ENCODE measurements at regions of chrX and their contacts with region 1.

Region 1: GRCh38 chrX:45134775-45135174 is 65.9 kb downstream of the DIPK2B start:
- DNase-seq: no peak
- H3K4me3 Mint-ChIP-seq: no peak overlapping the region
- H3K27ac Mint-ChIP-seq: no peak overlapping the region
- H3K4me1 Mint-ChIP-seq: no peaks in the 10 kb centered on the region
- H3K27me3 Mint-ChIP-seq: no peaks in the 10 kb centered on the region

Region 2: GRCh38 chrX:45050558-45050957 is 84.2 kb before region 1 on chrX:
- intact Hi-C with region 1: no loop called
- DNase-seq: no peak
- H3K4me3 Mint-ChIP-seq: no peak overlapping the region
- H3K27ac Mint-ChIP-seq: no peak overlapping the region
- H3K4me1 Mint-ChIP-seq: peaks cover 5% of the 10 kb centered on the region
- H3K27me3 Mint-ChIP-seq: no peaks in the 10 kb centered on the region

Region 3: DNA sequence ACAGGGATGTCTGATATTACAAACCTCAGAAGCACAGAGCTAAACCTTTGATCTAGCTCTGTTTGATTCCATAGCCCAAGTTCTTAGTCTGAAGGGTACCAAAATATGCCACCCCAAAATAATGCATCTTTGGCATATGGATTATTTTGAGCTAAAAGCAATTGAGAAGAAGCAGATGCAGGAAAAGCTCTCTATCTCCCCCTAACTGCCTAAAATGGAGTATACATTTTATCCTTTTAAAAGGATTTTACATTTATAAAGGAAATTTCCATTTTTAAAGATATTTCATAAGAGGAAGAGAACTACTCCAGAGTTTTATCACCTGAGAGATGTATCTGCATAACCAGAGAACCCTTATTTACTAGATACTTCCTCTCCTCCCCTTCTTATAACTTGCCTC is 1251.7 kb after region 1 on chrX:
- intact Hi-C with region 1: loop called (anchors 5 kb)
- DNase-seq: no peak
- H3K4me3 Mint-ChIP-seq: no peak overlapping the region
- H3K27ac Mint-ChIP-seq: no peak overlapping the region
- H3K4me1 Mint-ChIP-seq: no peaks in the 10 kb centered on the region
- H3K27me3 Mint-ChIP-seq: peaks cover 9% of the 10 kb centered on the region

Measured in activated T-helper 2 cell treated with anti-CD3 and anti-CD28 coated beads, Interferon-gamma antibody, Interleukin-2, Interleukin-4, amounts not matched to agents 10 μg/mL and 5 μg/mL and 100 μg/mL, durations not matched to agents 14 hours and 24 hours and 36 hours (primary cell).